Mucosa of descending colon (tissue), 3 donors: ENCODE measurements at regions of chr2 and their contacts with region 1.

Region 1: GRCh38 chr2:234550511-234551107 is 53.7 kb upstream of the ARL4C start:
- DNase-seq: peak in 2 of 3 donors; percentile 63 to 64
- ATAC-seq: peak; percentile 80
- H3K4me3 ChIP-seq: no peak overlapping the region
- H3K4me1 ChIP-seq: no peaks in the 10 kb centered on the region
- CTCF ChIP-seq: peak; percentile 67

Region 2: GRCh38 chr2:234269769-234270204 is 280.8 kb before region 1 on chr2:
- intact Hi-C with region 1: no loop called
- DNase-seq: no peak
- ATAC-seq: peak; percentile 83
- H3K4me3 ChIP-seq: no peak overlapping the region
- H3K4me1 ChIP-seq: no peaks in the 10 kb centered on the region
- CTCF ChIP-seq: no peak

Region 3: DNA sequence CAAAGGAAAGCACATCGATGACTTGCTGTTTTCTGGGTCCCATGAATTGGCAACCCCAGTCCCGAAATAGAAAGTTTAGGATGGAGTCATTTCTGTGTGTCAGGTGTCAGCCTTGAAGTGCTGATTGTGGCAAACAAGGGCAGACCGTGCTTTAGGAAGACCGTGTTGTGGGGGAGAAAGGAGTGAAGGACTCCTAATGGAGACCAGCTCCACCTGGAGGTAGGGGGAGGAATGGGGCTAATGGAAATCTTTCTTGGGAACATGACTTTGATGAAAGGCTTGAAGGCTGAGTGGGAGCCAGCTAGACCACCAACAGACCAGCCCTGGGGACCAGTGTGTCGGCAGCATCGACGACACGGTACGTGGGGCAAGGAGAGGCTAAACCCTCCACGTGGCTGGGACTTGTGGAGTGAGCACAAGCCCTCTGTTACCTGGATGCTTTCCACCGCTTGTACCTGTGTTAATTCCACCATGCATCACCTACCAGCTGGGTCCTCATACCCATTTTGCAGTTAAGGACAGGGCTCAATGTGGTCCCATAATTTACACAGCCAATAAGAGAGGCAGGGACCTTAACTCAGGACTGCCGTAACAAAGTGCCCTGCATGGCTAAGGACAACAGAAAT is 505.4 kb after region 1 on chr2:
- intact Hi-C with region 1: loop called in 1 of 2 experiments (anchors 2 kb)
- DNase-seq: peak in 2 of 3 donors; percentile 32 to 70
- ATAC-seq: peak; percentile 39
- H3K4me3 ChIP-seq: no peak overlapping the region
- H3K4me1 ChIP-seq: peaks cover 14% of the 10 kb centered on the region
- CTCF ChIP-seq: peak; percentile 32

Region 4: DNA sequence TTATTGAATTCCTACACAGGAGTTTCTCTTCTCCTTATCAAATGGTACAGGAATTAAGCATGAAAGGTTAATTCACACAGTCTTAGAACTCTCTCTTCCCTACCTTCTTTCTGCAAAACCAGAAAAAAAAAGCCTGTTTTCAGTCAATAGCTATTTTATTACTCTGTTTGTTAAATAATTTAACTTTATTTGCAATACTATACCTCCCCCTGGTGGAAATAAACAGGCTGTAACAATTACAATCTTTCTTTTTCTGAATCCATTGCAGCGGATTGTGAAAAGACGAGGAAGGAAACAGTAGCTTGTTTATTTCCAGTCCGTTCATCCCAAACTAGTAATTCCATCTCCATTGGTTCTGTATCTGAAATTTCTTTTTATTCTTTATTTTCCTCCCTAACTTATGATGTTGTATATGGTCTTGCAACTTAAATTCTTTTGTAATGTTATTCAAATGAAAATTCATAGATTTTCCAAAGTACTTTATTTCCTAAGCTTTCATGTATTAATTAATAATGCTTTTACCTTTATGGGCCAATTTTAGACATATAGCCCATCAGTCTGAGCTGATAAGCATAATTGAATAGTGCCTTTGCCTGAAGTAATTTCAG is 566.4 kb after region 1 on chr2:
- intact Hi-C with region 1: loop called (anchors 5 kb)
- DNase-seq: no peak
- ATAC-seq: peak; percentile 44
- H3K4me3 ChIP-seq: no peak overlapping the region
- H3K4me1 ChIP-seq: no peaks in the 10 kb centered on the region
- CTCF ChIP-seq: no peak